Activated B cell treated with CpG ODN at 0.5 μM for 24 hours (primary cell): ENCODE measurements at regions of chr6 and their contacts with region 1.

Region 1: GRCh38 chr6:27672113-27672799 is 199.4 kb upstream of the ZNF184 start:
- DNase-seq: no peak
- ATAC-seq: no peak
- H3K4me3 Mint-ChIP-seq: peak overlapping the region; percentile 2
- H3K27ac Mint-ChIP-seq: peak overlapping the region; percentile 2
- H3K4me1 Mint-ChIP-seq: peaks cover 26% of the 10 kb centered on the region
- H3K27me3 Mint-ChIP-seq: peaks cover 65% of the 10 kb centered on the region
- CTCF ChIP-seq: no peak

Region 2: GRCh38 chr6:27280064-27280539 is 392.2 kb before region 1 on chr6:
- CTCF ChIA-PET with region 1: no interaction called
- POLR2A ChIA-PET with region 1: interaction called, 3 read pairs
- intact Hi-C with region 1: loop called (anchors 2 kb)
- DNase-seq: no peak
- ATAC-seq: no peak
- H3K4me3 Mint-ChIP-seq: no peak overlapping the region
- H3K27ac Mint-ChIP-seq: no peak overlapping the region
- H3K4me1 Mint-ChIP-seq: peaks cover 5% of the 10 kb centered on the region
- H3K27me3 Mint-ChIP-seq: peaks cover 56% of the 10 kb centered on the region
- CTCF ChIP-seq: no peak

Region 3: GRCh38 chr6:27592481-27593199 is 79.6 kb before region 1 on chr6:
- CTCF ChIA-PET with region 1: no interaction called
- POLR2A ChIA-PET with region 1: no interaction called
- intact Hi-C with region 1: loop called (anchors 5 kb)
- DNase-seq: no peak
- ATAC-seq: peak; percentile 34
- H3K4me3 Mint-ChIP-seq: no peak overlapping the region
- H3K27ac Mint-ChIP-seq: no peak overlapping the region
- H3K4me1 Mint-ChIP-seq: no peaks in the 10 kb centered on the region
- H3K27me3 Mint-ChIP-seq: peaks cover 22% of the 10 kb centered on the region
- CTCF ChIP-seq: no peak

Region 4: DNA sequence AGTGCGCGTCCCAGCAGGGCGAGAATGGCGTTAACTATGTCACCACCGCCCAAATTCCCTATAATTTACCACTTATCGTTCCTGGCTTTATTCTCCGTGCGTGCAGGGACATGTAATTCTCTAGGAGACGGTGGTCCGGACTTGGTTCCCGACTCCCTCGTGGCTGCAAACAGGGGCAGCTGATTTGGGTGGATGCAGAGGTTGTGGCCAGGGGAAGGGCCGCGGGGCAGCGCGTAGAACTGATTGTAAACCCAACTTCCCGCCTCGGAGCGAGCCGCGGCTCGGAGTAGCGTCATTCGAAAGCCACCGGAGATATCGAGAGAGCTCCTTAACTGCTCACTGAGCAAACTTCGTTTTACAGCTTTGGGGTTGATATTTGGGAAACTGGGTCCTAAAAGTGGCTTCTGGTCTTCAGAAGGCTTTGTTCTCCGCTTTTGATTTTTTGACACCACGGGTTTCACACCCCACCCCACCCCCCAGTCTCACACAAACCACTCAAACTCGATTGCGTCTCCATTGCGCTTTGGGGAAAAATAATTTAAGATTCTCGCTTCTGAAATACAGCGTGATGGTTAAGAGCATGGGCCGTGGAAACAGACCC is 535.4 kb after region 1 on chr6:
- CTCF ChIA-PET with region 1: no interaction called
- POLR2A ChIA-PET with region 1: no interaction called
- intact Hi-C with region 1: loop called (anchors 5 kb)
- DNase-seq: no peak
- ATAC-seq: peak; percentile 49
- H3K4me3 Mint-ChIP-seq: peak overlapping the region; percentile 67
- H3K27ac Mint-ChIP-seq: no peak overlapping the region
- H3K4me1 Mint-ChIP-seq: peaks cover 26% of the 10 kb centered on the region
- H3K27me3 Mint-ChIP-seq: peaks cover 70% of the 10 kb centered on the region
- CTCF ChIP-seq: no peak

Region 5: GRCh38 chr6:28816909-28817807 is 1144.9 kb after region 1 on chr6:
- CTCF ChIA-PET with region 1: no interaction called
- POLR2A ChIA-PET with region 1: no interaction called
- intact Hi-C with region 1: loop called (anchors 10 kb)
- DNase-seq: no peak
- ATAC-seq: no peak
- H3K4me3 Mint-ChIP-seq: no peak overlapping the region
- H3K27ac Mint-ChIP-seq: no peak overlapping the region
- H3K4me1 Mint-ChIP-seq: peaks cover 6% of the 10 kb centered on the region
- H3K27me3 Mint-ChIP-seq: peaks cover 69% of the 10 kb centered on the region
- CTCF ChIP-seq: no peak